ENCODE measurements at regions of chr16 and their contacts with region 1.

Region 1: DNA sequence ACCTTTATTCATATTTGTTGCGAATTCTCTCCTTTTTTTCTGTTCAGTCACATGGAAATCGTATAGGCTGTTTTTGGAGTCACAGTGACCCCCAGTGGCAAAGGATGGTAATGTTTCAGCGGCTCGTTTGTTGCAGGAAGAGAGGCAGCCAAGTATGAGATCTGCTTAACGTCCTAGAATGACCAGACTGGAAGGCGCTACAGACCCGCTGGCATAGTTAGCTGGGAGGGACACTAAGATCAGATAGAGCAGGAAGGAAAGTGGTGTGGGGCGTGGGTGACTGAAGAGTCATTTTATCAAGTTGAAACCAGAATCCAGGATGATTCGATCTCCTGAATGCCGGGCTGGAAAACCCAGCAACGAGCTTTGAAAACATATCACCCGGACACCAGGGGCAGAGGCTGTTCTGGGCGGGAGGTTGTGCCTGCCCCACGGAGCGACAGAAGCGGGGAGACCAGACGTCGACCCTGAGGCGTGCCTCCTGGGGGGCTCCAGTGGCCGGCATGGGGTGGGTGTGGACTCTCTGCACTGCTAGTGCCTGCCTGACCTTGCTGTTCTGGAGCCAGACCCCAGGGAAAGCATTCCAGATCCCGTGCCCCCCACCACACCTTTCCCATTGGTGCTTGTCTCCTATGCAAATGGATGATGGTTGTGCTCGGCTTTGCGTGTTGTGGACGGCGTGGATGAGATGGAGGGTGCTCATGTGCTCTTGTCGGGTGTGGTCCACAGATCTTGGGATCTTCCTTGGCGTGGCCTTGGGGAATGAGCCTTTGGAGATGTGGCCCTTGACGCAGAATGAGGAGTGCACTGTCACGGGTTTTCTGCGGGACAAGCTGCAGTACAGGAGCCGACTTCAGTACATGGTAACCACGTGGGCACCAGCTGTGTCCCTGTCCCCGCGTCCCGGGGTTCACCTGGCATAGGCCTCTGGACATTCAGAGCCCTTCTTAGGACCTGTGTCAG is 7.7 kb downstream of the IL34 start:
- DNase-seq: peak; percentile 87
- H3K4me3 ChIP-seq: peak overlapping the region; percentile 33
- H3K27ac ChIP-seq: no peak overlapping the region
- H3K4me1 ChIP-seq: no peaks in the 10 kb centered on the region
- H3K27me3 ChIP-seq: no peaks in the 10 kb centered on the region
- CTCF ChIP-seq: peak; percentile 95

Region 2: DNA sequence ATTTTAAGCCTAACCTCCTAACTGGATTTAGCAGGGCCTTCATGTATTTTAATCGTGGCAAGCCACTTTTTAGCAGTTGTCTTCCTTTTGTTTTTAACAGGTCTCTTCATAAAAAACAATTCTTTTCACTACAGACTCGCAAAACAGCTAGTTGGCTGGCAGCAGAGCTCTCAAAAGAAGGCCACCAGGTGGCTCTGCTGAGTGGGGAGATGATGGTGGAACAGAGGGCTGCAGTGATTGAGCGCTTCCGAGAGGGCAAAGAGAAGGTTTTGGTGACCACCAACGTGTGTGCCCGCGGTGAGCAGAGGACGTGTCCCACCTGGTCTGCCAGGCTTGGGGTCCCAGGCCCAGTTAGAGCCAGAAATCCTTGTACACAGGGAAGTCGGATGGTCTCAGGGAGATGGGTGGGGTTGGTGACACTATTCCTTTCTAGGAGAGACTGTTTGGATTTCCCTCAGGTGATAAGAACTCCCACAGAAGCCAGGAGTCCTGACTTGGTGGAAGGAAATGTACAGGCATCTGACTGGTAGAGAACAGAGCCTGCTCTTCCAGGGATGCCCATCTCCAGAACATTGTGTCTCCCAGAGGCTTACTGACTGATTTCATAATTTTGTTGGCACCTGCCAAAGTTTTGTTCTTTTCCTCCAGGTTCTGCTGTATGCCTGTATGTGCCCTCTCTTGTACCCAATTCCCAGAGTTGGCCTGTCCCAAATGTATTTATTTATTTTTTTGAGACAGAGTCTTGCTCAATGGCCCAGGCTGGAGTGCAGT is 322.3 kb before region 1 on chr16:
- CTCF ChIA-PET with region 1: interaction called, 3 read pairs
- POLR2A ChIA-PET with region 1: no interaction called
- intact Hi-C with region 1: loop called (anchors 2 kb)
- DNase-seq: peak; percentile 47
- H3K4me3 ChIP-seq: no peak overlapping the region
- H3K27ac ChIP-seq: no peak overlapping the region
- H3K4me1 ChIP-seq: no peaks in the 10 kb centered on the region
- H3K27me3 ChIP-seq: no peaks in the 10 kb centered on the region
- CTCF ChIP-seq: peak; percentile 69

Region 3: GRCh38 chr16:70342016-70342415 is 312.1 kb before region 1 on chr16:
- CTCF ChIA-PET with region 1: interaction called, 10 read pairs
- POLR2A ChIA-PET with region 1: no interaction called
- intact Hi-C with region 1: no loop called
- DNase-seq: no peak
- H3K4me3 ChIP-seq: no peak overlapping the region
- H3K27ac ChIP-seq: no peak overlapping the region
- H3K4me1 ChIP-seq: peaks cover 5% of the 10 kb centered on the region
- H3K27me3 ChIP-seq: no peaks in the 10 kb centered on the region
- CTCF ChIP-seq: no peak

Region 4: GRCh38 chr16:70370924-70371323 is 283.2 kb before region 1 on chr16:
- CTCF ChIA-PET with region 1: interaction called, 5 read pairs
- POLR2A ChIA-PET with region 1: no interaction called
- intact Hi-C with region 1: loop called (anchors 2 kb)
- DNase-seq: no peak
- H3K4me3 ChIP-seq: no peak overlapping the region
- H3K27ac ChIP-seq: no peak overlapping the region
- H3K4me1 ChIP-seq: no peaks in the 10 kb centered on the region
- H3K27me3 ChIP-seq: no peaks in the 10 kb centered on the region
- CTCF ChIP-seq: no peak

Region 5: GRCh38 chr16:70454222-70455034 is 199.7 kb before region 1 on chr16 and contains the start of gene FCSK:
- CTCF ChIA-PET with region 1: no interaction called
- POLR2A ChIA-PET with region 1: no interaction called
- intact Hi-C with region 1: no loop called
- DNase-seq: peak; percentile 76
- H3K4me3 ChIP-seq: peak within 1 kb of the TSS; percentile 95
- H3K27ac ChIP-seq: peak within 1 kb of the TSS; percentile 100
- H3K4me1 ChIP-seq: peaks cover 4% of the 10 kb centered on the region
- H3K27me3 ChIP-seq: no peaks in the 10 kb centered on the region
- CTCF ChIP-seq: peak; percentile 24; the same call in 1 of the 2 replicates
- total RNA-seq, gene FCSK: 11.2 and 14.8 TPM in 2 replicates

Region 6: DNA sequence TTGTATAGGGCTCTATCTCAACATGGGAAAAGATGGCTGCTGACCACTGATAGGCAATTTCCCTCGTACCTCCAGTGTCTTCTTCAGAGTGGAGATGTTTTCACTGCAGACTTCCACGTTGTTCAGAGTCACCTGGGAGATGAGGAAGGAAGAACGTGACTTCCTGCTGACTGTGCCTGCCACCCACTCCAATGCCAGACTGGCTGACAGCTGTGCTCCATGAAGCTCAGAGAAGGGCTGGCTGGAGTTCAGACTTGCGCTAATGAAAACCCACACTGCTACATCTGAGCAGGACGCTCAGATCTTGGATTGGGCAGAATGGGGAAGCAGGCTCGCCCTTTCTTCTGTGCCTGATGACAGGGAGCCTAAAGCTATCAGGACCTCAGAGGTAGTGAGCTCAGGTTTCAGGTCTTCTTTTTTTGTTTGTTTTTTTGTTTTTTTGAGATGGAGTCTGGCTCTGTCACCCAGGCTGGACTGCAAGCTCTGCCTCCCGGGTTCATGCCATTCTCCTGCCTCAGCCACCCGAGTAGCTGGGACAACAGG is 163.8 kb before region 1 on chr16:
- CTCF ChIA-PET with region 1: no interaction called
- POLR2A ChIA-PET with region 1: no interaction called
- intact Hi-C with region 1: no loop called
- DNase-seq: no peak
- H3K4me3 ChIP-seq: no peak overlapping the region
- H3K27ac ChIP-seq: no peak overlapping the region
- H3K4me1 ChIP-seq: no peaks in the 10 kb centered on the region
- H3K27me3 ChIP-seq: no peaks in the 10 kb centered on the region
- CTCF ChIP-seq: no peak

Region 7: DNA sequence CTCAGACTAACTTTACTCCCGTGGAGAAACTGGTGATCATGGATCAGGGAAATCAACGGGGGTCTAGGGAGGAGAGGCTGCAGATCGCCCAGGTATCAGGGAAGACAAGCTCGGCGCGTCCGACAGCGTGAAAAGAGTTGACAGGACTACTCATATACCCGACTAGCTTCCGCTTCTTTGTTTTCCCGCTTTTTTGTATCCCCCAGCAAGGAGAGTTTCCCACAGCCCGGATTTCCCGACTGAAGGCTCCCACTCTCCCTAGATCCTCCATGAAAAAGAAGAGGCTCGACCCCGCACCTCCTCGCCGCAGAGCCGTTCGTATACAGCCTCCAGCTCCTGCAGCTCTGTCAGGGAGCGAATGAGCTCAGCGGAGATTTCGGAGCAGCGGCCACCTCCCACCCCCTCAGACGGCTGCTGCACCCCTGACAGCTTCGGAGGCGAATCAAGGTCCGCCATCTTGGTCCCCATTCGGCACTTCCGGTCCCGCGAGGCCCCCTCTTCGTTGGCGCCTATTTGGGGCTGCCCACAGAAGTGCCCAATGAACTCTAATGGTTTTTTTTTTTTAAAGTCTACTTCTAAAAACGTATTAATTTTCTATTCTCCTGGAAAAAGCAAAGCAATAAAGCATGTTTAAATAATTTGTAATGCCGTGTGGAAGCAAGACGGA is 130.9 kb before region 1 on chr16 and contains the start of gene COG4:
- CTCF ChIA-PET with region 1: no interaction called
- POLR2A ChIA-PET with region 1: no interaction called
- intact Hi-C with region 1: loop called (anchors 10 kb)
- DNase-seq: peak; percentile 92
- H3K4me3 ChIP-seq: peak within 1 kb of the TSS; percentile 67
- H3K27ac ChIP-seq: peak within 1 kb of the TSS; percentile 93
- H3K4me1 ChIP-seq: peaks cover 27% of the 10 kb centered on the region
- H3K27me3 ChIP-seq: no peaks in the 10 kb centered on the region
- CTCF ChIP-seq: no peak
- total RNA-seq, gene COG4: 68.6 and 82.4 TPM in 2 replicates

Region 8: GRCh38 chr16:70670175-70670574 is 16.1 kb after region 1 on chr16:
- CTCF ChIA-PET with region 1: no interaction called
- POLR2A ChIA-PET with region 1: interaction called, 14 read pairs
- intact Hi-C with region 1: no loop called
- DNase-seq: no peak
- H3K4me3 ChIP-seq: no peak overlapping the region
- H3K27ac ChIP-seq: no peak overlapping the region
- H3K4me1 ChIP-seq: no peaks in the 10 kb centered on the region
- H3K27me3 ChIP-seq: no peaks in the 10 kb centered on the region
- CTCF ChIP-seq: no peak